ENCODE measurements at regions of chr20 and their contacts with region 1.

Region 1: GRCh38 chr20:63360850-63361518 is at the start of gene CHRNA4:
- DNase-seq: no peak
- H3K4me3 ChIP-seq: no peak within 1 kb of the TSS
- H3K27ac ChIP-seq: no peak within 1 kb of the TSS
- H3K4me1 ChIP-seq: no peaks in the 10 kb centered on the region
- H3K27me3 ChIP-seq: peaks cover 62% of the 10 kb centered on the region
- CTCF ChIP-seq: no peak
- total RNA-seq, gene CHRNA4: not detected in 2 replicates

Region 2: DNA sequence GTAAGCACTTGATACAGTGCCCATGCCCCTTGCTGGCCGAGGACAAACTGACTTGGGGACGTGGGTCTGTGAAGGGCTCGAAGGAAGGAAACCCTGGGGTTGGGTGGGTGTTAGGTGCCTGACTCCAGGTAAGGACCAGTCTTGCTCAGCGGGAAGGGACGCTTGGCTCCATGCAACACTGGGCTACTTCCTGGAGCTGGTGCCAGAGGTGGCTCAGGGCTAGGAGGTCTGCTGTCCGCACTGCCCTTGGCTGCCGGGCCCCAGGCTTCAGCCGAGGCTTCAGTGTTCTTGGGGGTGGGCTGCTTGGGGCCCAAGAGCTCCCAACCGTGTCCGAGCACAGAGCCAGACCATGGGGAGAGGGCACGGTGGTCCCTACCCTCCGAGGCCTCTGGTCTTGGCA is 890.5 kb before region 1 on chr20:
- CTCF ChIA-PET with region 1: no interaction called
- POLR2A ChIA-PET with region 1: interaction called, 16 read pairs
- intact Hi-C with region 1: no loop called
- DNase-seq: no peak
- H3K4me3 ChIP-seq: no peak overlapping the region
- H3K27ac ChIP-seq: no peak overlapping the region
- H3K4me1 ChIP-seq: no peaks in the 10 kb centered on the region
- H3K27me3 ChIP-seq: peaks cover 45% of the 10 kb centered on the region
- CTCF ChIP-seq: no peak

Region 3: GRCh38 chr20:63627129-63627750 is 266.3 kb after region 1 on chr20:
- CTCF ChIA-PET with region 1: interaction called, 17 read pairs
- POLR2A ChIA-PET with region 1: no interaction called
- intact Hi-C with region 1: no loop called
- DNase-seq: peak; percentile 81 to 97
- H3K4me3 ChIP-seq: peak overlapping the region; percentile 92
- H3K27ac ChIP-seq: no peak overlapping the region
- H3K4me1 ChIP-seq: peaks cover 20% of the 10 kb centered on the region
- H3K27me3 ChIP-seq: no peaks in the 10 kb centered on the region
- CTCF ChIP-seq: no peak

Measured in PC-9 (cell line).